Endothelial cell of umbilical vein (primary cell): ENCODE measurements at regions of chr12 and their contacts with region 1.

Region 1: DNA sequence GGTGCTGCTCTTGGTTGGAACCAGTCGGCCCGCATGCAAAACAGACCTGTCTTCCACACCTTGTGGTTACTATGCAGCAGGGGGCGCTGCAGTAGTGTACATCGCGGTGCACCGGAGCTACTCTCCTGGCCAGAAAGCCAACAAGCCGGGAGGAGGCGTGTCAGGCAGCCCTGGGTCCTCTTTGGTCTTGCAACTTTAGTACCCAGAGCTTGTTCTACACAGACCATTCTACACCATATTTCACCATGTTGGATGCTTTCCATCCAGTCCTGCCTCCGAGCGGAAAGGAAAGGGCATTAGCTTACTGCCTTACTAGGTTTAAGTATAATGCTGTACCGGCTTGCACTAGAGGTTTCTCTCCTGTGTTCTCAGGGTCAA is 927 bp upstream of the TMTC2 start:
- DNase-seq: peak; percentile 93
- H3K4me3 ChIP-seq: peak overlapping the region; percentile 41 to 81 (median 77)
- H3K27ac ChIP-seq: no peak overlapping the region
- H3K4me1 ChIP-seq: peaks cover 14% of the 10 kb centered on the region
- H3K27me3 ChIP-seq: peaks cover 8 to 12% of the 10 kb centered on the region in 2 experiments
- CTCF ChIP-seq: peak; percentile 81 to 91
- POLR2A ChIP-seq: no peak

Region 2: DNA sequence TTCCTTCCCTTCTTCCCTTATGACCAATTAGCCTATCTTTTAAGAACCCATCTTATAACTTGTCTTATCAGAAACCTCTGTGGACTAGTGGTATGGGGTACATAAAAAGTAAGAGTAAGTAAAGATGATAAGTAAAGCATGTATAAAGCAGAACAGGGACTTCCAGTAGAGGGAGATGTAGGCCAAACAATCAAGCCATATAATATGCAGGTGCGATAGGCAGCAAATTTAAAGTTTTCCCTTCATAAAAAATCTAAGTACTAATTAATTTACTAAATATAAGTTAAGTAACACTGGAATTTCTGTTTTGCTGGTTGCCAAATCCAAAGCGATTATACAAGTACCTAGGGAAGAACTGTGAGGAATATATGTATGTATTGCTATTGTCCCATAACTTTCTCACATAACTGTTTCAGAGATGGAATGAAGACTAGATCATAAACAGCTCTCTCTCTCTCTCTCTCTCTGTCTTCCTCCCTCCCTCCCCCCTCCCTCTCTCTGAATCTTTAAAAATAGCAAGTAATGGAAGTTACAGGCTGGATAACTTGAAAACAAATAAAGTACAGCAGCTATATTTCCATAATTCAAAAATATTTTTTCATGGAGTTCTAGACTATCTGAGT is 301.7 kb before region 1 on chr12:
- CTCF ChIA-PET with region 1: interaction called, 12 read pairs
- POLR2A ChIA-PET with region 1: no interaction called
- dilution Hi-C with region 1: no loop called
- intact Hi-C with region 1: loop called (anchors 2 kb)
- DNase-seq: peak; percentile 85
- H3K4me3 ChIP-seq: no peak overlapping the region
- H3K27ac ChIP-seq: no peak overlapping the region
- H3K4me1 ChIP-seq: no peaks in the 10 kb centered on the region
- H3K27me3 ChIP-seq: no peaks in the 10 kb centered on the region
- CTCF ChIP-seq: peak; percentile 24 to 54
- POLR2A ChIP-seq: no peak

Region 3: GRCh38 chr12:82627569-82628198 is 58.1 kb before region 1 on chr12:
- CTCF ChIA-PET with region 1: no interaction called
- POLR2A ChIA-PET with region 1: no interaction called
- dilution Hi-C with region 1: no loop called
- intact Hi-C with region 1: no loop called
- DNase-seq: peak; percentile 46
- H3K4me3 ChIP-seq: no peak overlapping the region
- H3K27ac ChIP-seq: no peak overlapping the region
- H3K4me1 ChIP-seq: no peaks in the 10 kb centered on the region
- H3K27me3 ChIP-seq: no peaks in the 10 kb centered on the region
- CTCF ChIP-seq: peak in 1 of 2 donors; percentile 47
- POLR2A ChIP-seq: no peak

Region 4: GRCh38 chr12:82740129-82741000 is 54.6 kb after region 1 on chr12:
- CTCF ChIA-PET with region 1: interaction called, 5 read pairs
- POLR2A ChIA-PET with region 1: no interaction called
- dilution Hi-C with region 1: no loop called
- intact Hi-C with region 1: loop called (anchors 5 kb)
- DNase-seq: no peak
- H3K4me3 ChIP-seq: no peak overlapping the region
- H3K27ac ChIP-seq: no peak overlapping the region
- H3K4me1 ChIP-seq: peaks cover 19% of the 10 kb centered on the region
- H3K27me3 ChIP-seq: no peaks in the 10 kb centered on the region
- CTCF ChIP-seq: no peak
- POLR2A ChIP-seq: no peak

Region 5: GRCh38 chr12:83005534-83006197 is 319.9 kb after region 1 on chr12:
- CTCF ChIA-PET with region 1: interaction called, 6 read pairs
- POLR2A ChIA-PET with region 1: no interaction called
- dilution Hi-C with region 1: no loop called
- intact Hi-C with region 1: loop called (anchors 1 kb)
- DNase-seq: no peak
- H3K4me3 ChIP-seq: no peak overlapping the region
- H3K27ac ChIP-seq: no peak overlapping the region
- H3K4me1 ChIP-seq: no peaks in the 10 kb centered on the region
- H3K27me3 ChIP-seq: no peaks in the 10 kb centered on the region
- CTCF ChIP-seq: no peak
- POLR2A ChIP-seq: no peak

Region 6: GRCh38 chr12:83389237-83389996 is 703.6 kb after region 1 on chr12:
- CTCF ChIA-PET with region 1: interaction called, 6 read pairs
- POLR2A ChIA-PET with region 1: no interaction called
- dilution Hi-C with region 1: no loop called
- intact Hi-C with region 1: loop called (anchors 2 kb)
- DNase-seq: no peak
- H3K4me3 ChIP-seq: no peak overlapping the region
- H3K27ac ChIP-seq: no peak overlapping the region
- H3K4me1 ChIP-seq: no peaks in the 10 kb centered on the region
- H3K27me3 ChIP-seq: no peaks in the 10 kb centered on the region
- CTCF ChIP-seq: no peak
- POLR2A ChIP-seq: no peak

Region 7: GRCh38 chr12:84397263-84397662 is 1711.5 kb after region 1 on chr12:
- CTCF ChIA-PET with region 1: interaction called, 33 read pairs
- POLR2A ChIA-PET with region 1: no interaction called
- dilution Hi-C with region 1: no loop called
- intact Hi-C with region 1: loop called (anchors 1 kb)
- DNase-seq: peak; percentile 2
- H3K4me3 ChIP-seq: no peak overlapping the region
- H3K27ac ChIP-seq: no peak overlapping the region
- H3K4me1 ChIP-seq: no peaks in the 10 kb centered on the region
- H3K27me3 ChIP-seq: no peaks in the 10 kb centered on the region
- CTCF ChIP-seq: no peak
- POLR2A ChIP-seq: no peak